ENCODE measurements at regions of chr4 and their contacts with region 1.

Region 1: DNA sequence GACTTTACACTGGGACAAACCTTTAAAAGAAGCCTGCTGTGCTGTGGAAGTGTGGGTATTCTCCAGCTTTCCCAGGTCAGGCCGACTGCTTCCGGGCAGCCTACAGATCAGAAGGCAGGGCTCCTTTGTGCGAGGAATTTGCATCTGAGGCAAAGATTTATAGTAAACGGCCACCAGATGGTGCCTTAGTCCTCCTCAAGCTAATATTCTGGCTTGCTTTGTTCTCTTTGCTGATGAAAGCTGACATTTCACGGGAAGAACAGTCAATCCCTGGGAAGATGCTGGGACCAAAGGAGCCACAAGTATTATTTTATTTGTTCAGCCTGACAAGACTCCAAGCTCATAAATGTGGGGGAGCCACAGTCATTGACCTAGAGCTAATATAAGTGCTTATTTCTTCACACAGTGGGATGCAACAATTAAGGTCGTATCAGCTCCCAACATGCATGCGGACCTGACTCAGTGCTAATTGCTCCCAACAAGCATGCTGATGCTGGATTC is 120.7 kb upstream of the TRIM2 start:
- DNase-seq: peak; percentile 72 to 79 (median 76)
- H3K4me3 ChIP-seq: no peak overlapping the region
- H3K27ac ChIP-seq: no peak overlapping the region
- H3K4me1 ChIP-seq: peaks cover 0 to 46% (median 25%) of the 10 kb centered on the region in 4 experiments
- H3K27me3 ChIP-seq: no peaks in the 10 kb centered on the region

Region 2: GRCh38 chr4:152850377-152850776 is 233.1 kb before region 1 on chr4:
- CTCF ChIA-PET with region 1: interaction called, 63 read pairs
- POLR2A ChIA-PET with region 1: no interaction called
- DNase-seq: peak; percentile 80 to 94 (median 91)
- H3K4me3 ChIP-seq: peak overlapping the region in 4 of 7 experiments; percentile 31 to 52 (median 38)
- H3K27ac ChIP-seq: peak overlapping the region in 1 of 2 experiments; percentile 41
- H3K4me1 ChIP-seq: peaks cover 9 to 22% (median 17%) of the 10 kb centered on the region in 4 experiments
- H3K27me3 ChIP-seq: no peaks in the 10 kb centered on the region

Region 3: GRCh38 chr4:153095448-153096204 is 12.1 kb after region 1 on chr4:
- CTCF ChIA-PET with region 1: interaction called, 15 read pairs
- POLR2A ChIA-PET with region 1: no interaction called
- DNase-seq: no peak
- H3K4me3 ChIP-seq: no peak overlapping the region
- H3K27ac ChIP-seq: no peak overlapping the region
- H3K4me1 ChIP-seq: no peaks in the 10 kb centered on the region
- H3K27me3 ChIP-seq: no peaks in the 10 kb centered on the region

Region 4: GRCh38 chr4:153115322-153116290 is 32.1 kb after region 1 on chr4:
- CTCF ChIA-PET with region 1: interaction called, 48 read pairs
- POLR2A ChIA-PET with region 1: no interaction called
- DNase-seq: peak; percentile 79 to 94 (median 93)
- H3K4me3 ChIP-seq: peak overlapping the region in 5 of 7 experiments; percentile 25 to 69 (median 43)
- H3K27ac ChIP-seq: peak overlapping the region in 1 of 2 experiments; percentile 66
- H3K4me1 ChIP-seq: peaks cover 5 to 38% (median 33%) of the 10 kb centered on the region in 4 experiments
- H3K27me3 ChIP-seq: no peaks in the 10 kb centered on the region